Heart right ventricle (tissue), 16 donors: ENCODE measurements at regions of chr2 and their contacts with region 1.

Region 1: DNA sequence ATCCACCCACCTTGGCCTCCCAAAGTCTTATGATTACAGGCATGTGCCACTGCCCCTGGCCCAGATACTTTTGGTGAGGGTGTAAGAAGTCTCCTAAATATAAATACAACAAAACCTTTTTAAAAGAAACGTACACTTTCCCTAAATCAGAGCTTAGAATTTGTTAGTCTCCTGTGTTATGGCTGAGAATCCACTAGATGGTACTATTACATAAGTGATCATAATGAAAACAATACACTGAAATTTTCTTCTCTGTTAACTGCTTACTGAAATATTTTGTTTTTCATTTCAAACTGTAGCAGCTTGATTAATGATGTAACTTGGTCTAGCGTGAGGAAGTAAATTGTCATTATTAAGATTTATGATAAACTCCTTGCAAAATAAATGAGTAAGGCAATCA is 74.8 kb upstream of the FAM98A start:
- DNase-seq: no peak
- ATAC-seq: no peak
- H3K4me3 ChIP-seq: no peak overlapping the region
- H3K27ac ChIP-seq: no peak overlapping the region
- H3K4me1 ChIP-seq: no peaks in the 10 kb centered on the region
- H3K27me3 ChIP-seq: no peaks in the 10 kb centered on the region
- CTCF ChIP-seq: peak; percentile 19 to 71 (median 46)

Region 2: GRCh38 chr2:34567128-34567527 is 893.2 kb after region 1 on chr2:
- intact Hi-C with region 1: loop called in 1 of 10 experiments (anchors 10 kb)
- DNase-seq: no peak
- ATAC-seq: no peak
- H3K4me3 ChIP-seq: no peak overlapping the region
- H3K27ac ChIP-seq: no peak overlapping the region
- H3K4me1 ChIP-seq: no peaks in the 10 kb centered on the region
- H3K27me3 ChIP-seq: no peaks in the 10 kb centered on the region
- CTCF ChIP-seq: no peak